SK-N-SH (cell line): ENCODE measurements at regions of chr14 and their contacts with region 1.

Region 1: DNA sequence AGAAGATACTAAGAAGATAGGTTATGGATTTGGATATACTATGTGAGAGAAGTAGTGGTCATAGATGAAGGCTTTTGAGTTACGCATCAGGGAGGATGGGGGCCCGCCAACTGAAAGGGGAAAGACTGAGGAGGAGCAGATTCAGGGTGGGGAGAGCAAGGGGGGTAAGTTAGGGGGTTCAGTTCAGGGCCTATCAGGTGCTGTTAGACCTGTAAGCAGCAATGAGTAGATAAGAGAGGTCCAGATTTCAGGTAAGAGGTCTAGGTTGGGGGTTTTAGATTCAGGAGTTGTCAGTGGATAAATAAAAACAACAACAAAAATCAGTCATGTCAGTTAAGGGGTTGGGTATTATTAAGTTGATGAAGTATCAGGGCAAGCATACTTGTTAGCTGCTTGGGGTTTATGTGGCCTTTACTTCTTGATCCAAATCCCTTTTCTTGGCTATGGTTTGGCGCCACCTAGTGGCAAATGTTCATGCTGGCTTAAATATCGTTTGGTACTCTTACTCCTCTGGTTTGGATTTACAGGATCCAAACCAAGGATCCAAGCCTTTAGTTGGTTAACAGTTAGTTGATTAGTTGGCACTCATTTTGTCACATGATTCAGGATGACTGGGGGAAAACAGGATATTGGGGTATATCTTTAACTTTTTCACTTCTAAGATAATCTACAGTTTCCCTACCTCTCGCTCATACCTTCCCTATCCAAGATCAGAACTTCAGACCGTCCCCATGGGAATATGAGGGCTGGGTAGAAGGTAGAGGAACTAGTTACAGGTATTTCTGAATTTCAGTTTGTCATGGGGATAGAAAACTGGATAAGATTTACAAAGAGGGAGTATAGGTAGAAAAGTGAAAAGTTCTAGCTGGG is 65.1 kb downstream of the PCNX1 start:
- DNase-seq: peak; percentile 62
- H3K4me3 ChIP-seq: no peak overlapping the region
- H3K27ac ChIP-seq: no peak overlapping the region
- H3K4me1 ChIP-seq: no peaks in the 10 kb centered on the region
- H3K27me3 ChIP-seq: no peaks in the 10 kb centered on the region
- CTCF ChIP-seq: peak; percentile 95
- EP300 ChIP-seq: no peak
- RAD21 ChIP-seq: peak; percentile 84

Region 2: GRCh38 chr14:70821584-70822529 is 150.5 kb before region 1 on chr14:
- CTCF ChIA-PET with region 1: interaction called, 32 read pairs
- POLR2A ChIA-PET with region 1: no interaction called
- DNase-seq: peak; percentile 87
- H3K4me3 ChIP-seq: peak overlapping the region; percentile 65 to 91
- H3K27ac ChIP-seq: peak overlapping the region in 1 of 2 experiments; percentile 29; a peak in 1 of 4 replicates
- H3K4me1 ChIP-seq: peaks cover 0 to 7% of the 10 kb centered on the region in 2 experiments; a peak in 2 of 4 replicates
- H3K27me3 ChIP-seq: no peaks in the 10 kb centered on the region
- CTCF ChIP-seq: no peak
- EP300 ChIP-seq: no peak
- RAD21 ChIP-seq: no peak

Region 3: GRCh38 chr14:70827396-70828151 is 144.8 kb before region 1 on chr14:
- CTCF ChIA-PET with region 1: interaction called, 12 read pairs
- POLR2A ChIA-PET with region 1: no interaction called
- DNase-seq: no peak
- H3K4me3 ChIP-seq: no peak overlapping the region
- H3K27ac ChIP-seq: no peak overlapping the region
- H3K4me1 ChIP-seq: peaks cover 0 to 3% of the 10 kb centered on the region in 2 experiments; a peak in 2 of 4 replicates
- H3K27me3 ChIP-seq: no peaks in the 10 kb centered on the region
- CTCF ChIP-seq: no peak
- EP300 ChIP-seq: no peak
- RAD21 ChIP-seq: no peak

Region 4: GRCh38 chr14:70955543-70956480 is 16.5 kb before region 1 on chr14:
- CTCF ChIA-PET with region 1: interaction called, 21 read pairs
- POLR2A ChIA-PET with region 1: no interaction called
- DNase-seq: peak; percentile 25
- H3K4me3 ChIP-seq: 0 out of 4 replicates have a peak overlapping the region, but pooled peaks of 1 of the 2 experiments have one; percentile 8
- H3K27ac ChIP-seq: no peak overlapping the region
- H3K4me1 ChIP-seq: peaks cover 0 to 10% of the 10 kb centered on the region in 2 experiments; a peak in 2 of 4 replicates
- H3K27me3 ChIP-seq: no peaks in the 10 kb centered on the region
- CTCF ChIP-seq: peak; percentile 84
- EP300 ChIP-seq: no peak
- RAD21 ChIP-seq: peak; percentile 82